A673 (cell line): ENCODE measurements at regions of chr2 and their contacts with region 1.

Region 1: GRCh38 chr2:65991381-65992197 is 443.3 kb upstream of the MEIS1 start:
- DNase-seq: peak; percentile 97
- H3K4me3 ChIP-seq: no peak overlapping the region
- H3K27ac ChIP-seq: peak overlapping the region; percentile 60
- H3K4me1 ChIP-seq: peaks cover 22% of the 10 kb centered on the region
- H3K27me3 ChIP-seq: peaks cover 8% of the 10 kb centered on the region
- CTCF ChIP-seq: no peak

Region 2: GRCh38 chr2:65630643-65631042 is 360.9 kb before region 1 on chr2:
- CTCF ChIA-PET with region 1: no interaction called
- POLR2A ChIA-PET with region 1: no interaction called
- intact Hi-C with region 1: loop called (anchors 10 kb)
- DNase-seq: no peak
- H3K4me3 ChIP-seq: no peak overlapping the region
- H3K27ac ChIP-seq: no peak overlapping the region
- H3K4me1 ChIP-seq: peaks cover under 1% of the 10 kb centered on the region
- H3K27me3 ChIP-seq: no peaks in the 10 kb centered on the region
- CTCF ChIP-seq: no peak

Region 3: DNA sequence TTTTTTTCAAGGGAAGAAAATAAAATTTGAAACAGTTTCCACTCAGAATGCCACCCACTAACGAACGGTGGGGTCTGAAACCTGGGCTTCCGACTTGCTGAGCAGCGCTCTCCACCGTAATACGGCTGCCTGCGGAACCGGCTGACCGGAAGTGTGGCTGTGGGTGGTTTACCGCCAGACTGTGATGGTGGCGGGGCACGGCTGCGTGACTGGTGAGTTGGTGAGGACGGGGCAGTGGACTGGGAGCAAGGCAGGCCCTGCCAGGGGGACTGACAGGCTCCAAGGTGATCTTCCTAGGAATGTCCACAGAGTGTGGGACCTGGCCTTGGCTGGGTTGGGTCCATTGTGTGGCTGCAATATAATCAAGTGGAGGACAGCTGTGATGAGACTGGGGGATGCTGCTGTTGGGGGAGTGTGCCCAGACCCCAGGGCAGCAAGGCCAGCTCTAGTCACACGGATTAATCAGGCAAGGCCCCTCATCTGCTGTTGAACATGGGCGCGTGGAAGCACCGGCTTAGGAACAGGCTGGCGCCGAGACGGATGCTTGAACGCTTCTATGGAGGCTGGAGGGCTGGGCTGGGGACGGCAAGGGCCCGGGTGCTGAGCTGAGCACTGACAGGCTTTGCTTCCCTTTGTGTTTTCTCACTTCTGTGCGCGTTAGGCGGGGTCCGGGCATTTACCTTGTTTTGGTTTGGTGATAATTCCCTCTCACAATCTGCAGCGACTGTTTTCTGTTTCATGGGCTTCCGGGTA is 201.5 kb before region 1 on chr2:
- CTCF ChIA-PET with region 1: no interaction called
- POLR2A ChIA-PET with region 1: no interaction called
- intact Hi-C with region 1: loop called (anchors 10 kb)
- DNase-seq: no peak
- H3K4me3 ChIP-seq: no peak overlapping the region
- H3K27ac ChIP-seq: peak overlapping the region; percentile 54
- H3K4me1 ChIP-seq: peaks cover 33% of the 10 kb centered on the region
- H3K27me3 ChIP-seq: no peaks in the 10 kb centered on the region
- CTCF ChIP-seq: no peak

Region 4: GRCh38 chr2:66030553-66030952 is 39.0 kb after region 1 on chr2:
- CTCF ChIA-PET with region 1: no interaction called
- POLR2A ChIA-PET with region 1: no interaction called
- intact Hi-C with region 1: no loop called
- DNase-seq: peak; percentile 55
- H3K4me3 ChIP-seq: no peak overlapping the region
- H3K27ac ChIP-seq: no peak overlapping the region
- H3K4me1 ChIP-seq: no peaks in the 10 kb centered on the region
- H3K27me3 ChIP-seq: no peaks in the 10 kb centered on the region
- CTCF ChIP-seq: peak; percentile 49